AG04449 (cell line): ENCODE measurements at regions of chr6 and their contacts with region 1.

Region 1: GRCh38 chr6:165245287-165245686 is 64.1 kb downstream of the C6orf118 start:
- DNase-seq: no peak
- H3K4me3 ChIP-seq: no peak overlapping the region
- CTCF ChIP-seq: peak; percentile 6

Region 2: GRCh38 chr6:165055231-165055630 is 190.1 kb before region 1 on chr6:
- CTCF ChIA-PET with region 1: interaction called, 15 read pairs
- POLR2A ChIA-PET with region 1: no interaction called
- DNase-seq: no peak
- H3K4me3 ChIP-seq: no peak overlapping the region
- CTCF ChIP-seq: no peak

Region 3: GRCh38 chr6:165231581-165232561 is 13.4 kb before region 1 on chr6:
- CTCF ChIA-PET with region 1: interaction called, 29 read pairs
- POLR2A ChIA-PET with region 1: no interaction called
- DNase-seq: no peak
- H3K4me3 ChIP-seq: no peak overlapping the region
- CTCF ChIP-seq: peak; percentile 32